ENCODE measurements at regions of chr2 and their contacts with region 1.

Region 1: DNA sequence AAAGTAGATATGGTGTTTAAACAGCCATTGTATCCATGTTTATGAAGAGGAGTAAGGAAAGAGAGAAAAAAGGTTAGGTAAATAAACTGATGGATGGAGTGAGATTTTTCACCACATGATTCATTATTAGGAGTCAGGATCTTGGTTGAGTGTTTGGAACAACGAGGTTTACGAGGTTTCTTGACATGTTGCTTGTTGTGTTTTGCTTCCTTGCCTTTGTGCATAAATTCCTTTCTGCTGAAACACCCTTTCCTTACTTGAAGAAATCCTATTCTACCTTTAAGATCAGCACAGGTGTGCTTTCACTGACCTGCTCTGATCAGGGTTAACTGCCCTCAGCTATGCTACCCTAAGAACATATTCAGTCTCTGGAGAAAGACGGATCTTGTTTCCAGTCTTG is 66.6 kb downstream of the EFEMP1 start:
- DNase-seq: no peak
- ATAC-seq: no peak
- H3K4me3 ChIP-seq: no peak overlapping the region
- H3K27ac ChIP-seq: no peak overlapping the region
- H3K4me1 ChIP-seq: no peaks in the 10 kb centered on the region
- H3K27me3 ChIP-seq: no peaks in the 10 kb centered on the region
- CTCF ChIP-seq: no peak
- EP300 ChIP-seq: no peak
- POLR2A ChIP-seq: no peak
- RAD21 ChIP-seq: no peak

Region 2: GRCh38 chr2:55846426-55846825 is 10.5 kb before region 1 on chr2:
- CTCF ChIA-PET with region 1: no interaction called
- POLR2A ChIA-PET with region 1: no interaction called
- in situ Hi-C with region 1: no loop called
- intact Hi-C with region 1: loop called (anchors 1 kb)
- DNase-seq: no peak
- ATAC-seq: no peak
- H3K4me3 ChIP-seq: no peak overlapping the region
- H3K27ac ChIP-seq: no peak overlapping the region
- H3K4me1 ChIP-seq: peaks cover 37% of the 10 kb centered on the region
- H3K27me3 ChIP-seq: no peaks in the 10 kb centered on the region
- CTCF ChIP-seq: no peak
- EP300 ChIP-seq: no peak
- POLR2A ChIP-seq: no peak
- RAD21 ChIP-seq: no peak

Measured in HepG2 (cell line).